Esophagus squamous epithelium (tissue), 5 donors: ENCODE measurements at regions of chr20 and their contacts with region 1.

Region 1: DNA sequence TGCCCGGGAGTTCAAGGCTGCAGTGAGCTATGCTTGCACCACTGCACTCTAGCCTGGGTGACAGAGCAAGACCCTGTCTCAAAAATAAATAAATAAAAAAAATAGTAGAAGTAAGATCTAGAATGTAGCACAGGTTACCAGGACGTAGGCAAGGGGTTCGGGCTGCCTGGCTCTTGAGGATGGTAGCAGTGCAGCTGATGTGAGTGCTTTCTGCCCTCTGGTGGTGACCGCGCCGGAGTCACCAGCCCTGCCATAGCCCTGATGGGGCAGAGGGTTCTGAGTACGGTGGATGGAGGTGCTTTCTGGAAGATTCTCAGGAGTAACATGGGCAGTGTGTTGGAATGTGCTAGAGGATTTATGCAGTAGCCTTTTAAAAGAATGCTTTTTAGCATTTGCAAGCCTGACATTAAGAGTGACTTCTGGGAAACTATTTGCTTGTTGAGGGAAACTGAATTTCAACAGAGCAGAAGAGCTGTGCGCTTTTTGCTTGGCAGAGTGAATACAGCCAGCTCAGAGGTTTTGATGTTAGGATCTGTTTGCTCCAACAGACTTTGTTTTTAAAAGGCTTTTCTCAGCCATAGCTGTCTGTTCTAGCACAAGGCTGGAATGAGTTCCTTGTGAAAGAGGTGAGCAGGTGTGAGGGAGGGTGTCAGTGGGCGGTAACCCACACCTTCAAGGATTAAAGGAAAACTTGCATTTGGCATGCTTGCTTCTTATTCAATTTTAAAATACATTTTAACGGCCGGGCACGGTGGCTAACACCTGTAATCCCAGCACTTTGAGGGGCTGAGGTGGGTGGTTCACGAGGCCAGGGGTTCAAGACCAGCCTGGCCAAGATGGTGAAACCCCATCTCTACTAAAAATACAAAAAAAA is 65.9 kb downstream of the PTPN1 start:
- DNase-seq: no peak
- H3K4me3 ChIP-seq: no peak overlapping the region
- H3K27ac ChIP-seq: peak overlapping the region in 2 of 4 donors; percentile 1 to 42
- H3K4me1 ChIP-seq: peaks cover 7 to 55% (median 10%) of the 10 kb centered on the region in 3 donors
- H3K27me3 ChIP-seq: no peaks in the 10 kb centered on the region
- CTCF ChIP-seq: peak; percentile 46 to 88 (median 80)
- POLR2A ChIP-seq: no peak

Region 2: DNA sequence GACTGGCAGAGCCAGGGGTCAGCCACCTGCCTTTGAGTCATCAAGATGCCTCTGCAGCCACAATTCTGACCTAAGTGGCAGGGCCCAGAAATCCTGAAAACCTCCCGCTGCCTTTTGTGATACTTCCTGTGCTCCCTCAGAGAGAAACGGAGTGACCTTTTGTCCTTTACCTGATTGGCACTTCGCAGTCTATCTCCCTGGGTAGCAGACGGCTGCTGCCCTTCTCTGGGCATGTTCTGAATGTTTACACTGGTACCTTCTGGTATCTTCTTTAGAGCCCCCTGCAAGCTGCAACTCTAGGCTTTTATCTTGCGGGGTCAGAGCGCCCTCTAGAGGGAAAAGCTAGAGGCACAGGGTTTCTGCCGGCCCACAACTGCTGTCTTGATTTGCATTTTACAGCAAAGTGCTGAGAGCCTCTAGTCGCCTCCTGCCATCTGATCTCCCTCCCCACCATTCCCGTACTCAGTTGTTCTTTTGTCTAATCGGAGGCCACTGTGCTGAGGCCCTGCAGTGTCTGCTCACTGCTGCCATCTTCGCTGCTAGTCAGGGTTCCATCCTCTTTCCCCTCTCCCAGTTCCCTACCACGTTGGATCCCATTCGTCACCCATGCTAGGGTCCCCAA is 687.6 kb before region 1 on chr20:
- intact Hi-C with region 1: no loop called
- DNase-seq: no peak
- H3K4me3 ChIP-seq: no peak overlapping the region
- H3K27ac ChIP-seq: peak overlapping the region in 3 of 4 donors; percentile 33 to 79 (median 75)
- H3K4me1 ChIP-seq: peaks cover 0 to 70% (median 19%) of the 10 kb centered on the region in 3 donors
- H3K27me3 ChIP-seq: no peaks in the 10 kb centered on the region
- CTCF ChIP-seq: peak; percentile 66 to 76 (median 70)
- POLR2A ChIP-seq: no peak

Region 3: GRCh38 chr20:50179507-50180016 is 396.5 kb before region 1 on chr20:
- intact Hi-C with region 1: loop called (anchors 5 kb)
- DNase-seq: no peak
- H3K4me3 ChIP-seq: no peak overlapping the region
- H3K27ac ChIP-seq: no peak overlapping the region
- H3K4me1 ChIP-seq: no peaks in the 10 kb centered on the region
- H3K27me3 ChIP-seq: no peaks in the 10 kb centered on the region
- CTCF ChIP-seq: peak in 1 of 6 experiments; percentile 12
- POLR2A ChIP-seq: no peak

Region 4: GRCh38 chr20:50438986-50439407 is 137.1 kb before region 1 on chr20:
- intact Hi-C with region 1: no loop called
- DNase-seq: no peak
- H3K4me3 ChIP-seq: no peak overlapping the region
- H3K27ac ChIP-seq: peak overlapping the region; percentile 49 to 89 (median 66)
- H3K4me1 ChIP-seq: peaks cover 4 to 58% (median 41%) of the 10 kb centered on the region in 3 donors
- H3K27me3 ChIP-seq: no peaks in the 10 kb centered on the region
- CTCF ChIP-seq: no peak
- POLR2A ChIP-seq: peak in 1 of 4 donors; percentile 26

Region 5: DNA sequence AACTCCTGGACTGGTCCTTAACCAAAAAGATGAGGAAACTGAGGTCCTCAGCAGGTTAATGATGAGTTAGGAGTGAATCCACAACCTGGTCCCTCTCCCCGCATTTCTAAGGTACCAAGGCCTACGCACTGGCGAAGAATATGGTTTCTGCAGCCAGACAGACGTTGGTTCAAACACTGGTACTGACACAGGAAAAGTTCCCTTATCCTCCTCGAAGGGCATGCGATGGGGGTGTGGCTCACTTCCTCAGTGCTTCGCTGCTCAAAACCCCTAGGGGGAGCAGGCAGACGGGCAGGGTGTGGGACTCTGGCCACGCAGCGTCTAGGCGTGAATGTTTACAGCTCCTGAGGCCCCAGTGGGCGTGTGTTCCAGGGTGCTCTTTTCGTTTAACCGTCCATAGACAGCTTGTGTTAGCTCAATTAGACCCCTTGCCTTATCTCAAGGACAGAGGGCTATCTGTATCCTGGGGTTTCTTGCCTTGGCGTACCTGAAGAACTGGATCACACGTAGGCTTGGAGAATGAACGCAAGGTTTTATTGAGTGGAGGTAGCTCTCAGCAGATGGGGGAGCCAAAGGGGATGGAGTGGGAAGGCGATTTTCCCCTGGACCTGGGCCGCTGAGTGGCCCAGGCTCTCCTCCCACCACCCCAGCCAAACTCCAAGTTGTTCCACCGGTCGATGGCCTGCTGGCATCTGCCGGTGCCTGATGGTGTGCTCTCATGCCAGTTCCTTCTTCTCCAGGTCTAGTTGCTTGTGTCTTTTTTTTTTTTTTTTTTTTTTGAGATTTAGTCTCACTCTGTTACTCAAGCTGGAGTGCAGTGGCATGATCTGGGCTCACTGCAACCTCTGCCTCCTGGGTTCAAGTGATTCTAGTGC is 97.7 kb before region 1 on chr20:
- intact Hi-C with region 1: loop called (anchors 5 kb)
- DNase-seq: no peak
- H3K4me3 ChIP-seq: no peak overlapping the region
- H3K27ac ChIP-seq: no peak overlapping the region
- H3K4me1 ChIP-seq: peaks cover 14 to 42% (median 19%) of the 10 kb centered on the region in 3 donors
- H3K27me3 ChIP-seq: no peaks in the 10 kb centered on the region
- CTCF ChIP-seq: peak; percentile 59 to 84 (median 73)
- POLR2A ChIP-seq: no peak

Region 6: DNA sequence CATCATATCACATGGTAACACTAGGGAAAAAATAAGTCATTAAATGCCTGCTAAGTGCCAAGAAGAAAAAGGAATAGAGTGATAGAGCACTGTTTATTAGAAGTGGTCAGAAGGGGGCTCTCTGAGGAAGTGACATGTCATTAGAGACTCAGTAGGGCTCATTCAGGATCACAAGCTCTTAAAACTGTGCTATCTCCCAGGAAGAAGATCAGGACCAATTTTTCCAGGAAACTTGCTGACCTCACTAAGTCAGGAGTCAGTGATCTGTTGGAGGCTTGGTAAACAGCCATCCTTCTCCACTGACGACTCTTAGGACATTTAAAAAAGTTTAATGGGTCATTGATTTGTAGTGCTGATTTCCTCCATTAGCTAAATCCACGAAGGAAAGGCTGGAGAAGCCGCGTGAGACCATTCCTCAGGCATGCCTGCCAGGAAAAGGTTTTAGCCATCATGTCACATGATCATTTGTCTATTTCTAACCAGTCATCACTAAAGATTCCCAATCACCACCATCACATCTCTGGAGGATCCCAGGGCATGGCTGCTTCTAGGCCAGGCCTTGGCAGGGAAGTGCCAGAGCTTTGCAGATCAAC is 71.8 kb before region 1 on chr20:
- intact Hi-C with region 1: no loop called
- DNase-seq: no peak
- H3K4me3 ChIP-seq: no peak overlapping the region
- H3K27ac ChIP-seq: peak overlapping the region in 3 of 4 donors; percentile 43 to 60 (median 53)
- H3K4me1 ChIP-seq: peaks cover 9 to 49% (median 15%) of the 10 kb centered on the region in 3 donors
- H3K27me3 ChIP-seq: no peaks in the 10 kb centered on the region
- CTCF ChIP-seq: peak in 1 of 6 experiments; percentile 24
- POLR2A ChIP-seq: no peak

Region 7: DNA sequence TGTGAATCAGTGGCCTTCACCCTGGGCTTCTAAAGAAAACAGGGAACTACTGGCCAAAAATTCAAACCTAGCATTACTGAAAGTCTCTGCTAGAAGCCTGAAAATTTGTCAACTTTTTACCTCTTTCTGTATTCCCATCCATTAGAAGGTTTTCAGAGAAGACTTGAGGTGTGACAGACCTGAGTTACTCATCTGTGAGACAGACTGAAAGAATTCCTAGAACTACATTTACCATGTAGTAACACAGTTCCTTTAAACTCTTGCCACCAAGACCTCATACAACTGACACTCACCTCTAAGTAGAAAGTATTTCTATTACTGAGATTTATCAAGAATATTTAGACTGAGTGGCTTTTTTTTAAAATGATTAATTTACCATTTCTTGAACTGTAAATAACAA is 377.7 kb after region 1 on chr20:
- intact Hi-C with region 1: no loop called
- DNase-seq: no peak
- H3K4me3 ChIP-seq: no peak overlapping the region
- H3K27ac ChIP-seq: no peak overlapping the region
- H3K4me1 ChIP-seq: peaks cover 8 to 34% (median 13%) of the 10 kb centered on the region in 3 donors
- H3K27me3 ChIP-seq: no peaks in the 10 kb centered on the region
- CTCF ChIP-seq: no peak
- POLR2A ChIP-seq: no peak